Posterior cingulate gyrus (tissue), 11 donors: ENCODE measurements at regions of chr2 and their contacts with region 1.

Region 1: GRCh38 chr2:33583194-33583938 is 15.7 kb downstream of the FAM98A start:
- DNase-seq: peak in 3 of 10 donors; percentile 48 to 81 (median 49)

Region 2: GRCh38 chr2:32559136-32559535 is 1024.2 kb before region 1 on chr2:
- intact Hi-C with region 1: loop called (anchors 5 kb)
- DNase-seq: peak in 9 of 10 donors; percentile 41 to 94 (median 60)

Region 3: DNA sequence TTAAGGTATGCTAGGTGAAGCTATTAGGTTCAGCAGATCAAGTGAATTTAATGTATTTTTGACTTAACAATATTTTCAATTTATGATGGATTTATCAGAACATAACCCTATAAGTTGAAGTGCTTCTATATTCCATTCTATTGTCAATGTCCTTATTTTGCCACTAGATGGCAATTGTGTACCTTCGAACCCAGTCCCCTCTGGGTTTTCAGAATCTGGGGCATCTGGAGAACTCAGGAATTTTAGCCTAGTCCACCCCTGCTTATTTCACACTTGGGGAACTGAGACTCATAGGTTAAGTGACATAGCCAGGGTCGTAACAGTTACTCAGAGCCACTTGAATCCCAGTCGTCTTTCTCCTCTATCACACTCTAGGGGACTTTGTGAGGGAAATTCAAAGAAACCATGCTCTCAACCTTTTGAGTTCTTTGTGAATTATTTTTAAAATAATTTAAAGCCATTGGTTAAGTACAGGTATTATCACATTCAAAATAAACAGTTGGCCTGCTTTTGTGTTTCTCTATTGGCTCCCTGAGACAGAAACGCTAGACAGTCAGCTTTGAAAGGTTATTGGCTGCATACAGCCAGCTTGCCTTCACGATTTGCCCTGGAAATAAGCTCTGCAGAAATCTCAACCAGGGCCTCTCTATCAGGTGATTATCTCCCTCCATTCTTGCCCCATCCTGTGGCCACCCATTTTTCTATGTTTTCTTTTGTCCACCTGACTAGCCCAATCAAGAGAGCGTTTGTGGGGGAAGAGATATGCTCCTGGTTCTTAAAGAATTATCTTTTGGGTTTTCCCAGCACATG is 810.5 kb before region 1 on chr2:
- intact Hi-C with region 1: loop called (anchors 5 kb)
- DNase-seq: peak in 1 of 10 donors; percentile 13

Region 4: GRCh38 chr2:33412920-33413319 is 170.4 kb before region 1 on chr2:
- intact Hi-C with region 1: loop called (anchors 10 kb)
- DNase-seq: no peak

Region 5: GRCh38 chr2:33441235-33441810 is 142.0 kb before region 1 on chr2:
- intact Hi-C with region 1: loop called (anchors 10 kb)
- DNase-seq: peak in 9 of 10 donors; percentile 21 to 93 (median 68)

Region 6: DNA sequence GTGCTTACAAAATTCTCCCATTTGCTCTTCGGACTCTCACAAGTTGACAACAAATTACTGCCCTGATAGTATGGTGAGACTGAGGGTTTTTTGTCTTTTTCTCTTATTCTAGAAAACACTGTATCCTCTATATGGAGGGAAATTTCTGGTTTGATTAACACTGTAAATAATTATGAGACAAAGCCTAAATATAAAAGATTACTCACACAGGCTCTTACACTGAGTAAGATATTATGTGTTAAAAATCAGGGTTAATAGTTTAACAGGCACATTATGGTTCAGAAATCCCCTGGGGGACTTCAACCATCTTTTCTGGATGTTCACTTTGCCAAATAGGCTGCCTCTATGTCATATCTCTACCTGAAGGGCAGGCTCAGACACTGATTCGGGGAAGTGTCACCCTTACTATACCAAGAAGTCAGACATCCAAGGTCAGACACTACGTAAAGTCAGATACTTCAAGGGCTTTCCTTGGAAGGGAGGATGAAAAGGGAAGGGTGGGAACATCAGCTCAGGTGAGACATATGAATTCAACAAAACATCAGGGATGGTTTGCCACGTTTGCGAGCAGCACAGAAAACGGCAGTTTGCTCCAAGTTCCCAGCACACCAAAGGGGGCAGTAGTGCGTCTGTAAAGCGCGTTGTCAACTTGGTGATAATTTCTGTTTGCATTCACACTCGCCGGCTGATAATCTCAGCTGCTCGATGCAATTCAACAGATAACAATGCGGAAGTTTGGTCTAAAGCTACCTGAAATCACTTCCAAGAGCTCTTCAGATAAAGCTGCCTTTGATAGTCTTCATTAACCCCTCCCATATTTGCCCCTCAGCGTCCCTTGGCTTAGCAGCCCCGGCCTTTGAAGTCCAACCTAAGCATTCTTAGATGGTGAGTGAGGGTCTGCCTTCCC is 107.9 kb before region 1 on chr2:
- intact Hi-C with region 1: loop called (anchors 2 kb)
- DNase-seq: peak; percentile 52 to 96 (median 80)

Region 7: DNA sequence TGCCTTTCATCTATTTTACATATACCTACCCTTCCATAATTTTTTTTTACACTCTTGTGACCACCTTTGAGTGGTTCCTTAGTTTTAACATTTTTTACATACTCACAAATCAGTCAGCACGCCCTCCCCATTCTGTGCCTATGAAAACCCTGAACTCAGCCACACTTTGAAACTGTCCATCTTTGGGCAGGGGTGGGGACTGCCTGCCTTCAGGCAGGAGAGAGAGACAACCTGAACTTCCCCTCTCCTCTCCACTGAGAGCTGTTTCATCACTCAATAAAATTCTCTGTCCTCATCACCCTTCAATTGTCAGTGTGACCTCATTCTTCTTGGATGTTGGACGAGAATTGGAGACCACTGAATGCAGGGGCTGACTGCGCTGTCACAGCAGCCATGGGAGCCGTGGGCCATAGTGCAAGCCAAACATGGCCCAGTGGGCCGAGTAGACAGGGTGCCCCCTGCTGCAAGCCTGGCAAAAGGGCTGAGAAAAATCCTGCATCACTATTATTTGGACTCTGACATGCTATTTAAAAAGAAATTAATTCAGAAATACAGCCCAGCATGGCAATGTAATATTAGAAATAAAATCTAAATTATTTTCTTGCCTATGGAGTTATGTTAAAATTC is 83.4 kb after region 1 on chr2:
- intact Hi-C with region 1: no loop called
- DNase-seq: no peak